SK-N-SH (cell line): ENCODE measurements at regions of chr20 and their contacts with region 1.

Region 1: GRCh38 chr20:46132705-46133120 is 14.6 kb downstream of the CD40 start:
- DNase-seq: peak; percentile 88
- H3K4me3 ChIP-seq: peak overlapping the region in 1 of 2 experiments; percentile 33; a peak in 1 of 4 replicates
- H3K27ac ChIP-seq: no peak overlapping the region
- H3K4me1 ChIP-seq: peaks cover 0 to 35% of the 10 kb centered on the region in 2 experiments; a peak in 1 of 4 replicates
- H3K27me3 ChIP-seq: peaks cover 30% of the 10 kb centered on the region; the same call in 1 of the 2 replicates
- CTCF ChIP-seq: peak; percentile 90
- EP300 ChIP-seq: no peak
- RAD21 ChIP-seq: peak; percentile 94

Region 2: DNA sequence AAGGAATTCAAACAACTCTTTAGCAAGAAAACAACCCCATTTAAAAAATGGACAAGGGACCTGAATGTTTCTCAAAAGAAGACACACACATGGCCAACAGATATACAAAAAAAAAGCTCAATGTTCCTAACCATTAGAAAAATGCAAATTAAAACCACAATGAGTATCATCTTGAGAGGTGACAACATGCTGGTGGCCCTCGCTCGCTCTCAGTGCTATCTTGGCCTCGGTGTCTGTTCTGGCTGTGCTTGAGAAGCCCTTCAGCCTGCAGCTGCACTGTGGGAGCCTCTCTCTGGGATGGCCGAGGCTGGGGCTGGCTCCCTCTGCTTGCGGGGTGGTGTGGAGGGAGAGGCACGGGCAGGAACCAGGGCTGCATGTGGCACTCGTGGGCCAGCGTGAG is 397.2 kb before region 1 on chr20:
- CTCF ChIA-PET with region 1: no interaction called
- POLR2A ChIA-PET with region 1: no interaction called
- DNase-seq: no peak
- H3K4me3 ChIP-seq: no peak overlapping the region
- H3K27ac ChIP-seq: no peak overlapping the region
- H3K4me1 ChIP-seq: no peaks in the 10 kb centered on the region
- H3K27me3 ChIP-seq: no peaks in the 10 kb centered on the region
- CTCF ChIP-seq: no peak
- EP300 ChIP-seq: no peak
- RAD21 ChIP-seq: no peak

Region 3: DNA sequence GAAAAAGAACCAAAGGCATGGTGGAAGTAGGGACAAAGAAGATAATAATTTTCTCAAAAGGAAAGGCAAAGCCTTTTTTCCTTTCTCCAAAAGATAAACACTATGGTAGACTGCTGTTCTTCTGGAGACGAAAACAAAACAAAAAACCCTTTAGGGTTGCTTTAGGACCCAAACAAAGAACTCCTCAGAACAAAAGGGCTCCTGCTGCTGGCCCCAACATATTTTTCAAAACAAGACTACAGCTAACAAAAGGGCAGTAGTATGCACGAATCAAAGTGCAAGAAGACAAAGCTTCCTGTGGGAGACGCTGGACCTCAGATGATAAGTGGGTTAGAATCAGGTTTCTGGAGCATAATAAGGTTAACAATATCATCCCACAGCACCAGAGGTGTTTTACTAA is 58.7 kb before region 1 on chr20:
- CTCF ChIA-PET with region 1: no interaction called
- POLR2A ChIA-PET with region 1: no interaction called
- DNase-seq: no peak
- H3K4me3 ChIP-seq: no peak overlapping the region
- H3K27ac ChIP-seq: no peak overlapping the region
- H3K4me1 ChIP-seq: 0 out of 4 replicates have a peak, but pooled peaks cover 0 to 7% of the 10 kb centered on the region in 2 experiments
- H3K27me3 ChIP-seq: no peaks in the 10 kb centered on the region
- CTCF ChIP-seq: no peak
- EP300 ChIP-seq: no peak
- RAD21 ChIP-seq: no peak

Region 4: GRCh38 chr20:46151936-46152335 is 19.2 kb after region 1 on chr20:
- CTCF ChIA-PET with region 1: interaction called, 44 read pairs
- POLR2A ChIA-PET with region 1: no interaction called
- DNase-seq: peak; percentile 67
- H3K4me3 ChIP-seq: no peak overlapping the region; a peak in 1 of 4 replicates
- H3K27ac ChIP-seq: no peak overlapping the region
- H3K4me1 ChIP-seq: peaks cover 0 to 49% of the 10 kb centered on the region in 2 experiments; a peak in 2 of 4 replicates
- H3K27me3 ChIP-seq: no peaks in the 10 kb centered on the region; the same call in 1 of the 2 replicates
- CTCF ChIP-seq: peak; percentile 56
- EP300 ChIP-seq: no peak
- RAD21 ChIP-seq: no peak

Region 5: DNA sequence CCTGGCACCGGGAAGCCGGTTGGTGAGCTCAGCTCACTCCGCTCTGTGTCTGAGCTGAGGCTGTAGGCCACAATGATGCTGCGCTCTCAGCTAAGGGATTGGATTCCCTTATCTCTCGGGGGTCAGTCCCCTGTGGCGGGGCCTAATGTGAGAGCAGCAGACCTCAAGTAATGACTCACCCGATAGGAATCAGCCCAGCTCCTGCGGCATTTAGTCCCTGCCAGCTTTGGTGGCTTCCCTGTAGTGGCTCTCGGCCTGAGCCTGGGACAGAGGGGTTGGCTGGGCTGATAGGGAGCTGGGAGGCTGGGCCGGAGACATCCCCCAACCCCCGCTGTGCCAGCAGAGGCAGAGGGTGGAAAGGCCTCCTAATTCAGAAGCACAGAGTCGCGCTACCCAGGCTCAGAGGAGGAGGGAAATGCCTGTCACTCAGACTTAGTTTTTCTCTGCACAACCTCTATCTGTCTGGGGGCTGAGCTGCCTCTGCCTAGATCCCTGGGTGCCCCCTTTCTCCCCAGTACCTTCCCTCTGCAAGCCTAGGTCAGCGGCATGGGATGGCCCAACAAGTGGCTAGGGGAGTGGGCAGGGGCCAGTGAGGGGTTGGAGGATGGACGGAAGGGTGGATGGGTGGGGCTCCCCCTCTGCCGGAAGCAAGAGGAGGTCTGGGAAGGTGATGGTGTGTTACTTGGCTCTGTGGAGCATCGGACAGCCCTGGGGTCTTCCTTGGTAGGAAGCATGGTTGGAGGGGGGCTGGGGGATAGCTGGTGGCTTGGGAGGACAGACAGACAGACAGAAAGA is 83.4 kb after region 1 on chr20:
- CTCF ChIA-PET with region 1: interaction called, 10 read pairs
- POLR2A ChIA-PET with region 1: no interaction called
- DNase-seq: peak; percentile 93
- H3K4me3 ChIP-seq: no peak overlapping the region
- H3K27ac ChIP-seq: peak overlapping the region in 1 of 2 experiments; percentile 78; a peak in 2 of 4 replicates
- H3K4me1 ChIP-seq: peaks cover 0 to 29% of the 10 kb centered on the region in 2 experiments; a peak in 1 of 4 replicates
- H3K27me3 ChIP-seq: no peaks in the 10 kb centered on the region
- CTCF ChIP-seq: no peak
- EP300 ChIP-seq: peak in 1 of 2 experiments; percentile 49; a peak in 1 of 4 replicates
- RAD21 ChIP-seq: peak; percentile 28

Region 6: DNA sequence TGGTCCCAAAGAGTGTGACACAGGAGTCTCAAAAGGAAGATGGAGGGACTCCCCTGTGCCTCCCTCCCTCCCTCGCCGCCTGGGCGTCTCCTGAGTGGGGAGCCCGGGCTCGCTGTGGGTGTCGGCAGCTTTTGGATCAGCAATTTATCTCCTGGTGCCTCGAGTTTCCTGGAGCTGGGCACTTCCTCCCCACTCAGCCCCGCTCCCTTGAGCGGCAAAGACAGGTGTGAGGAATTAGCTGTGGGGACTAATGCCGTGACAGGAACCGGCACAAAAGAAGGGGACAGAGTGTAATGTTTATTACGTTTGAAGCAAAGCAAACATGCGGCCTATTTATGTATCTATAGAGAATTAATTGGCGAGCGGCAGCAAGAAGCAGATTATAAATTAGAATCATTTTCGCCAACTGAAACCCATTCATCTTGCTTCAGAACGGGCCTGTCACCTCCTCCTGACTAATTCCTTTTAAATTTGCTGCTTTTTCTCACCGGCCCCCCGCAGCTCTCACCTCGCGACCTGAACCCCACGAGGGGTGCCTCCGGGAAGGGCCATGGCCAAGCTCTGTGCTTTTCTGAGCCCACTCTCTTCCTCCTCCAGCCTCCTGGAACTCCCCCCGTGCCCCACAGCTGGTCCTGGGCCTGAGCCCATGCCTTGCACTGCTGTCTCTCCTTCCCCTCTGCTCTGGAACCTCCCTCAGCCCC is 184.4 kb after region 1 on chr20:
- CTCF ChIA-PET with region 1: interaction called, 13 read pairs
- POLR2A ChIA-PET with region 1: no interaction called
- DNase-seq: no peak
- H3K4me3 ChIP-seq: no peak overlapping the region
- H3K27ac ChIP-seq: no peak overlapping the region
- H3K4me1 ChIP-seq: peaks cover 0 to 3% of the 10 kb centered on the region in 2 experiments; a peak in 1 of 4 replicates
- H3K27me3 ChIP-seq: peaks cover 30% of the 10 kb centered on the region
- CTCF ChIP-seq: no peak
- EP300 ChIP-seq: no peak
- RAD21 ChIP-seq: no peak

Region 7: GRCh38 chr20:46349035-46349741 is 216.5 kb after region 1 on chr20:
- CTCF ChIA-PET with region 1: interaction called, 219 read pairs
- POLR2A ChIA-PET with region 1: interaction called, 3 read pairs
- DNase-seq: peak; percentile 90
- H3K4me3 ChIP-seq: peak overlapping the region in 1 of 2 experiments; percentile 28; a peak in 1 of 4 replicates
- H3K27ac ChIP-seq: 0 out of 4 replicates have a peak overlapping the region, but pooled peaks of 1 of the 2 experiments have one; percentile 81
- H3K4me1 ChIP-seq: peaks cover 16 to 51% of the 10 kb centered on the region in 2 experiments; a peak in 3 of 4 replicates
- H3K27me3 ChIP-seq: no peaks in the 10 kb centered on the region
- CTCF ChIP-seq: peak; percentile 82
- EP300 ChIP-seq: no peak
- RAD21 ChIP-seq: peak; percentile 93

Region 8: GRCh38 chr20:46406199-46406985 is 273.7 kb after region 1 on chr20 and contains the start of gene ELMO2:
- CTCF ChIA-PET with region 1: interaction called, 23 read pairs
- POLR2A ChIA-PET with region 1: no interaction called
- DNase-seq: peak; percentile 95
- H3K4me3 ChIP-seq: peak within 1 kb of the TSS; percentile 85 to 96
- H3K27ac ChIP-seq: peak within 1 kb of the TSS; percentile 88 to 93
- H3K4me1 ChIP-seq: peaks cover 4 to 17% of the 10 kb centered on the region in 2 experiments; a peak in 2 of 4 replicates
- H3K27me3 ChIP-seq: no peaks in the 10 kb centered on the region
- CTCF ChIP-seq: no peak
- EP300 ChIP-seq: no peak
- RAD21 ChIP-seq: no peak
- polyA plus RNA-seq, gene ELMO2: 32.1 and 38.5 TPM in 2 replicates